Right ventricle myocardium superior (tissue), 1 donor: ENCODE measurements at regions of chr2 and their contacts with region 1.

Region 1: GRCh38 chr2:67840460-67841068 is 222.2 kb downstream of the C1D start:
- DNase-seq: peak; percentile 75
- ATAC-seq: peak; percentile 98

Region 2: DNA sequence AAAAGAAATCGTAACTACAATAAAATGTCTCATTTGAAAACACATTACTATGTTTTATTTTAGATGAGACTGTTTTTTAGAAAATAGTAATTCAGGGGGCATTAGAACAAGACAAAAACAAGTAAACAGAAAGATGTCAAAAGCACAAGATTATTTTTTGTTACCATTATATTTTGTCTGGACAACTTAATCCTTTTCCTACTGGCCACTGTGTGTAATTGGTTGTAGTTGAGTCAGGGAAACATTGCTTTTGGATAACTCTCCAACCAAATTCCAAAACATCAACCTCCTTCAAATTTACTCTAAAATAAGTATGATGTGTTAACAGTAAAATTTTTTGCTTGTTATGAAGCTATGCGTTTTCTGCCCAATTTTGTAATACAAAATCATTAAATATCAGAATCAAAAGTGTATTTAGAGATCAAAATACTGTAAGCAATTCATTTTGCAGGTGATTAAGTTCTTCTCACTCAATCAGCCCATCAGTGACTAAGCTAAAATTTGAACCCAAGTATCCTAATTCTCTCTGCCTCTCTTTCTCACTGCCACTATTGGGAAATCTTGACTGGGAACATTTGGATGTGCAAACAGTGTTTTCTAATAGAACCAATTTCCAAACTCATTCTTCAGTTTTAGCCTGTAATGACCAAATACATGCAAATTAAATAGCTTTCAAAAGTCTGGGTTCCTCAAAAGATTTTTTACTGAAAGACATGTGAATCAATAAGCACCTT is 1417.0 kb before region 1 on chr2:
- intact Hi-C with region 1: loop called (anchors 5 kb)
- DNase-seq: no peak
- ATAC-seq: no peak

Region 3: DNA sequence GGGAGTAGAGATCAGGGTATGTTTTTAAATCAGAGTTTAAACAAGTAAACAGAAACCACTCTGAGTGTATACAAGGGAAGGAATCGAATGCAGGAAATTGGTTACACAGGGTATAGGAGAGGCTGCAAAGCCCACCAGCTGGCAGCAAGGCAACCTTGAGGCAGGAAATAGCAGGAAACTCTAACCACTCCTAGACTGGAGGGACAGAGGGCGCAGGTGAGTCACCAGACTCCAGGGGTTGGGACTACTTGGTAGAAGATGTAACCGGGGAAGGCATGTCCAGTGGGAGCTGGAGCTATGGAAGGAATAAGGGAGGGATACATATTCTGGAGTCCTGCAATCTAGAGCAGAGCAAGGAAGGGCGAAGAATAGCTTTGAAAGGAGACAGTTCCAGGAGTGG is 1253.3 kb before region 1 on chr2:
- intact Hi-C with region 1: loop called (anchors 10 kb)
- DNase-seq: no peak
- ATAC-seq: no peak

Region 4: GRCh38 chr2:67631483-67631882 is 209.1 kb before region 1 on chr2:
- intact Hi-C with region 1: no loop called
- DNase-seq: no peak
- ATAC-seq: no peak

Region 5: DNA sequence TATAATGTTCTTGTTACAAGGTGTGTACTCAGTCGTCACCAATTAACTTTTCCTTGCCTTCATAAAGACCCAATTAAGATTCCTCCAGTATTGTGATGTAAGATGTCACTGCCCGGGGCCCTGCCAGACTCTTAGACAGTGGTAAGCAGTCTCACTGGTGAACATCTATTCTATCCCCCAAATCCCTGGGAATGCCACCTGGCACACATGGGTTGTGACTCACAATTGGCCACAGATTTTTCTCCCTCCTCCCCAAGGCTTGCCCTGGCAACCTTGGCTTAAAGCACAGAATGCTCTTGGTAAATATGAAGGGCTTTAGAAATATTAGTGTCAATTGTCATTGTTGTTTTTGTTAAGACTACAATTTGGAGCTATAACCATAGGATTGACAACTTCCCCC is 155.6 kb before region 1 on chr2:
- intact Hi-C with region 1: no loop called
- DNase-seq: no peak
- ATAC-seq: no peak

Region 6: GRCh38 chr2:67965246-67965645 is 124.7 kb after region 1 on chr2:
- intact Hi-C with region 1: no loop called
- DNase-seq: no peak
- ATAC-seq: no peak